ENCODE measurements at regions of chr16 and their contacts with region 1.

Region 1: GRCh38 chr16:66608241-66609138 is 4.0 kb downstream of the CMTM3 start:
- DNase-seq: peak; percentile 44 to 93
- H3K4me3 ChIP-seq: no peak overlapping the region
- H3K27ac ChIP-seq: peak overlapping the region in 1 of 2 donors; percentile 49
- H3K4me1 ChIP-seq: peaks cover 0 to 18% of the 10 kb centered on the region in 2 donors
- H3K27me3 ChIP-seq: no peaks in the 10 kb centered on the region
- CTCF ChIP-seq: peak; percentile 87 to 96 (median 94)

Region 2: DNA sequence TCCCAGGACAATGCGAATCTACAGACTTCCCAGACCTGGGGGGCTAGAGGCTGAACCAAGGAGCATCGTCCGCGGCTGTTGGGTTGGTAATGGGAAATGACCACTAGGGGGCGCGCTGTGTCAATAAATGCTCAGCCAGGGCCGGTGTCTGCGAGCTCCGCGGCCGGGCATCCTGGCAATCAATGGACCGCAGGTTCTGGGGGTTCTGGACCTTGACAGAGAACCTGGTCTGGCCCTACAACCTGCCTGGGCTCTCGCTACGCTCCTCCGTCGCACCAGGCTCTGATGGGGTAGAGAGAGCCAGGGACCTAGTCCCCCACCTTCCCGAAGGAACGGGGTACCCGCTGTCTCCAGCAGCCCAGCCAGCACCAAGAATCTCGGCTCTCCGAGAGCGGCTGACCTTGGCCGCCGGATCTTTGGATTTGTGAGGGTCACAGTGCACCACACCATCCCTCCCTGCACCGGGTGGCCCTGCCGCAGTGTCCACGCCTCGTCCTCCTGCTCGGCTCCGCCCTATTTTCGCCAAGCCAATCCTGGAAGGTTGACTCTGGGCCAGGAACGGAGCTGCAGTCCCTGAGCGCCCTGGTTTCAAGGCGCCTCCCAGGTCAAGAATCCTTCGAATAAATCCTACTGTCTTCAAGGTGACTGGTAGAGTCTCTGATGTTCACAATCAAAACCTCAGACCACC is 201.8 kb before region 1 on chr16:
- intact Hi-C with region 1: loop called (anchors 1 kb)
- DNase-seq: peak in 1 of 2 donors; percentile 92
- H3K4me3 ChIP-seq: peak overlapping the region; percentile 65 to 69
- H3K27ac ChIP-seq: no peak overlapping the region
- H3K4me1 ChIP-seq: peaks cover 0 to 5% of the 10 kb centered on the region in 2 donors
- H3K27me3 ChIP-seq: no peaks in the 10 kb centered on the region
- CTCF ChIP-seq: peak; percentile 82 to 91 (median 87)

Region 3: DNA sequence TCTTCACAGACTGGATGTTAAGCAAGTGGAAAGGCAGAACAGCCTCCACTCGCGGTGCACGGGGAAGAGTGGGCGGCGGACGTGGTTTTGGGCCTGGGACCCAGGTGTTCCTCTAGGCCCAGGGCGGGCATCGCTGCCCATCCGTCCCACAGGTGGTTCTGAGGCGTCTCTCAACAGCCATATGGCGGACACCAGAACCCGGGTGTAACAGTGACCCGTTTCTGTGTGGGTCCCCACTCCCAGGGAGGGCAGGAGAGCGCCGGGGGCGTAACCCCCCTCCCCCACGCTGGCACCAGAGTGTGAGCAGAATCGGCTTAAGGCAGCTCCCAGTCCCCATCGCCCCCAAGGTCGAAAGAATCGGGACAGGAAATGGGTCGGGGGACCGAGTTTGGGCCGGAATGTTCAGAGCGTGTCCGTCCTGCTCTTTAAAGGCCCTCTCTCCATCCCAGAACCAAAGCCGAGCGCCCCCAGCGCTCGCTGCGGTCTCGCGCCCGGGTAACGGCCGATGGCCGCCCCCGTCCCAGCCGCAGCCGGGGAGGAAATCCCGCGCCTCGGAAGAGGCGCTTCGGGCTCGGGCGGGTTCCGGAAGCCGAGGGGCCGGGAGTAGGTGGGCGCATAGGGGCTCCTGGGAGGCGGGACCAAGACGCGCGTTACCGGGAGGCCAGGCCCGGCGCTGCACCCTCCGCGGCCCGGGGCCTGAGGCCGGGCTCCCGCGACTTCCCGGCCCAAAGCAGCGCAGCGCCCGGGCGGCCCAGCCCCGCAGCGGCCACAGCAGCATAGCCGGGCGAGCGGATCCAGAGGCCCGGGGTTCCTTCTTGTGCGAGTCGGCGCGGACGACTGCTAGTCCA is 59.0 kb before region 1 on chr16 and contains the start of gene TK2:
- intact Hi-C with region 1: loop called (anchors 2 kb)
- DNase-seq: peak in 1 of 2 donors; percentile 85
- H3K4me3 ChIP-seq: peak within 1 kb of the TSS; percentile 90 to 98
- H3K27ac ChIP-seq: peak within 1 kb of the TSS; percentile 94 to 99
- H3K4me1 ChIP-seq: peaks cover 11 to 24% of the 10 kb centered on the region in 2 donors
- H3K27me3 ChIP-seq: no peaks in the 10 kb centered on the region
- CTCF ChIP-seq: peak in 2 of 3 experiments; percentile 15 to 25
- total RNA-seq, gene TK2: 21.5 TPM

Region 4: GRCh38 chr16:66696669-66697630 is 88.5 kb after region 1 on chr16 and contains the start of gene CMTM4:
- intact Hi-C with region 1: loop called (anchors 1 kb)
- DNase-seq: peak; percentile 37 to 90
- H3K4me3 ChIP-seq: peak within 1 kb of the TSS; percentile 83 to 88
- H3K27ac ChIP-seq: peak within 1 kb of the TSS; percentile 75
- H3K4me1 ChIP-seq: peaks cover 0 to 3% of the 10 kb centered on the region in 2 donors
- H3K27me3 ChIP-seq: no peaks in the 10 kb centered on the region
- CTCF ChIP-seq: peak in 1 of 3 experiments; percentile 22
- total RNA-seq, gene CMTM4: 20.1 TPM

Region 5: GRCh38 chr16:66872559-66872942 is 264.1 kb after region 1 on chr16:
- intact Hi-C with region 1: loop called (anchors 5 kb)
- DNase-seq: no peak
- H3K4me3 ChIP-seq: peak overlapping the region; percentile 19 to 64
- H3K27ac ChIP-seq: peak overlapping the region; percentile 47 to 79
- H3K4me1 ChIP-seq: peaks cover 3 to 6% of the 10 kb centered on the region in 2 donors
- H3K27me3 ChIP-seq: no peaks in the 10 kb centered on the region
- CTCF ChIP-seq: no peak